Stomach (tissue), 19 donors: ENCODE measurements at regions of chr22 and their contacts with region 1.

Region 1: DNA sequence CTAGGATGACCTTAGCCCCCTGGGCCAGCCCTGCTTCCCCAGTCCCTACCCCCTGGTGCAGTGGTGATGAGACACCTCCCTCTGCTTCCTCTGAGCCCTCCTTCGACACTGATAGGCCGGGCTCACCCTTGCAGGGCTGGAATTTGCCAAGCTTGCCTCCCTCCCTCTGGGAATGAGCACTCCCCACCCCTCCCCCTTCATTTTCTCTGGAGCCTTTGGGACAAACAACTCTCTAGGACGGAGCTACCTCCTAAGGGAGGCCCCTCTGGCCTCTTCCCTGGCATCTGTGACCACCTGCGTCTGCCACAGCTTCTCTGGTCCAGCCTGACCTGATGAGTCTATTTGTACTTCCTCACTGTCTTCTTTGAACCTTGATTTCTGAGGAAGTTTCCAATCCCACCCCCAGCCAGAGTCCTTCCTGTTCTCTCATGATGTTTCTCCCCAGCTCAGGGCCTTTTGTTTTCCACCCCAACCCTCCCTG is 53.3 kb upstream of the ADA2 start:
- DNase-seq: no peak
- H3K4me3 ChIP-seq: no peak overlapping the region
- H3K27ac ChIP-seq: no peak overlapping the region
- H3K4me1 ChIP-seq: no peaks in the 10 kb centered on the region
- H3K27me3 ChIP-seq: no peaks in the 10 kb centered on the region
- CTCF ChIP-seq: no peak
- EP300 ChIP-seq: no peak
- POLR2A ChIP-seq: no peak

Region 2: GRCh38 chr22:17234144-17234623 is 38.4 kb before region 1 on chr22:
- intact Hi-C with region 1: loop called (anchors 5 kb)
- DNase-seq: peak in 1 of 2 donors; percentile 22
- H3K4me3 ChIP-seq: no peak overlapping the region
- H3K27ac ChIP-seq: no peak overlapping the region
- H3K4me1 ChIP-seq: no peaks in the 10 kb centered on the region
- H3K27me3 ChIP-seq: peaks cover 0 to 47% (median 3%) of the 10 kb centered on the region in 3 donors
- CTCF ChIP-seq: no peak
- EP300 ChIP-seq: no peak
- POLR2A ChIP-seq: no peak